H1 (cell line): ENCODE measurements at regions of chr3 and their contacts with region 1.

Region 1: GRCh38 chr3:87082796-87083440 is 92.0 kb upstream of the VGLL3 start:
- DNase-seq: peak; percentile 5 to 45
- H3K4me3 ChIP-seq: no peak overlapping the region
- H3K27ac ChIP-seq: no peak overlapping the region
- H3K4me1 ChIP-seq: peaks cover 0 to 3% (median under 1%) of the 10 kb centered on the region in 4 experiments; a peak in 3 of 7 replicates
- H3K27me3 ChIP-seq: peaks cover 0 to 1% (median 0%) of the 10 kb centered on the region in 4 experiments; a peak in 1 of 7 replicates
- CTCF ChIP-seq: peak in 2 of 3 experiments; percentile 69; a peak in 3 of 4 replicates
- EP300 ChIP-seq: no peak
- POLR2A ChIP-seq: no peak
- RAD21 ChIP-seq: peak; percentile 90 to 92

Region 2: GRCh38 chr3:87006844-87007439 is 76.0 kb before region 1 on chr3:
- CTCF ChIA-PET with region 1: interaction called, 19 read pairs
- POLR2A ChIA-PET with region 1: no interaction called
- DNase-seq: no peak
- H3K4me3 ChIP-seq: no peak overlapping the region
- H3K27ac ChIP-seq: no peak overlapping the region
- H3K4me1 ChIP-seq: no peaks in the 10 kb centered on the region
- H3K27me3 ChIP-seq: no peaks in the 10 kb centered on the region
- CTCF ChIP-seq: peak in 2 of 3 experiments; percentile 21 to 28; a peak in 2 of 4 replicates
- EP300 ChIP-seq: no peak
- POLR2A ChIP-seq: no peak
- RAD21 ChIP-seq: peak; percentile 43 to 45

Region 3: DNA sequence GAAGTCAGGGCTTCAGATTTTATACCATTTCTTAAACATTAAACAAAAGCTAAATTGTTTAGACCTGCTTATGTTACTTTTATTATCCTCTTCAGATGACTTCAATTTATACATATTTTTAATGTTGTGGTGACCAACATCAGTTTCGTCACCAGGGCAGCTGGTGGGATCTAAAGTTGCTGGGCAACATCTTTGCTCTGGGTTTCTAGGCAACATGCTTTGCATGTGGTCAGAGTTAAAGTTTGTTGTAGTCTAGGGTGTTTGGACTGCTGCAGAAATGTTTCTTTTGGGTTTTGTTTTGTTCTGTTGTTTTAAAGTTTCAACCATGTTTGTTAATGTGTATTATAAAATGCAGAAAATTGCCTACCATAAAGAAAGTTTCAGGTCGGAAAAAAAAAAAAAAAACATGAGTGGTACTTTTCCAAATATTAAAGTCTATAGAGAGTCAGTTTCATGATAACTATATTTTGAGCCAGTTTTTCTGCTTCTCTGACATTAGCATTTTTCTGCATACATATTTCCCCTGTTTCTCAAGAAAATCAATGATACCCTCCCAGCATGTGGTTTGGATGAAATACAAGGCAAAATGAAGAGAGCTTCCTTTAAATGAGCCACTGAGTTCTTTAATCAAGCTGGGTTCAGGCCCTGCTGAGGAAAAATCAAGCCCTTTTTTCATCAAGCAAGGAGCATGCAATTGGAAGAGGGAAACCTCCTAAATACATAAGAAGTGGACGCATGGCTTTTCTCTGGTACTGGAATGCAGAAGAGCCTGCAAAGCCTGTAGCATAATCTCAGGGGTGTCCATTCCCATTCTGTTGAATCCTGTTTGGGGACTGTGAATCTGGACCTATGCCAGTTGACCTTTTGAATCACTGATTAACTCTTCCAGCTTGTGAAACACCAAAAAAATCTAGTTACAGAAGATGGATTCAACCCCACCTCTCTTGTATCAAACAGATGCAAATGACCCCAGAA is 57.0 kb before region 1 on chr3:
- CTCF ChIA-PET with region 1: no interaction called
- POLR2A ChIA-PET with region 1: no interaction called
- DNase-seq: no peak
- H3K4me3 ChIP-seq: no peak overlapping the region
- H3K27ac ChIP-seq: no peak overlapping the region
- H3K4me1 ChIP-seq: no peaks in the 10 kb centered on the region
- H3K27me3 ChIP-seq: no peaks in the 10 kb centered on the region
- CTCF ChIP-seq: no peak
- EP300 ChIP-seq: no peak
- POLR2A ChIP-seq: no peak
- RAD21 ChIP-seq: no peak

Region 4: DNA sequence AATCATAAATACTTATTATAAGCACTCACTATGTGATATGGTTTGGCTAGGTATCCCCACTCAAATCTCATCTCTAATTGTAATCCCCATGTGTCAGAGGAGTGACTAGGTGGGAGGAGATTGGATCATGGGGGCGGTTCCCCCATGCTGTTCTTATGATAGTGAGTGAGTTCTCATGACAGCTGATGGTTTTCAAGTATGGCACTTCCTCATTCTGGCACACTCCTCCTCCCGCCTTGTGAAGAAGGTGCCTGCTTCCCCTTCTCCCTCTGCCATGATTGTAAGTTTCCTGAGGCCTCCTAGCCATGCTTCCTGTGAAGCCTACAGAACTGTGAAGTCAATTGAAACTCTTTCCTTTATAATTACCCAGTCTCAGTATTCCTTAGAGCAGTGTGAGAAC is 90.9 kb after region 1 on chr3:
- CTCF ChIA-PET with region 1: no interaction called
- POLR2A ChIA-PET with region 1: no interaction called
- DNase-seq: no peak
- H3K4me3 ChIP-seq: no peak overlapping the region
- H3K27ac ChIP-seq: no peak overlapping the region
- H3K4me1 ChIP-seq: no peaks in the 10 kb centered on the region
- H3K27me3 ChIP-seq: no peaks in the 10 kb centered on the region
- CTCF ChIP-seq: no peak
- EP300 ChIP-seq: no peak
- POLR2A ChIP-seq: no peak
- RAD21 ChIP-seq: no peak